Lower leg skin (tissue), 4 donors: ENCODE measurements at regions of chr13 and their contacts with region 1.

Region 1: GRCh38 chr13:29513397-29514322 is 81.8 kb downstream of the SLC7A1 start:
- DNase-seq: no peak
- H3K4me3 ChIP-seq: no peak overlapping the region
- CTCF ChIP-seq: no peak
- POLR2A ChIP-seq: no peak

Region 2: DNA sequence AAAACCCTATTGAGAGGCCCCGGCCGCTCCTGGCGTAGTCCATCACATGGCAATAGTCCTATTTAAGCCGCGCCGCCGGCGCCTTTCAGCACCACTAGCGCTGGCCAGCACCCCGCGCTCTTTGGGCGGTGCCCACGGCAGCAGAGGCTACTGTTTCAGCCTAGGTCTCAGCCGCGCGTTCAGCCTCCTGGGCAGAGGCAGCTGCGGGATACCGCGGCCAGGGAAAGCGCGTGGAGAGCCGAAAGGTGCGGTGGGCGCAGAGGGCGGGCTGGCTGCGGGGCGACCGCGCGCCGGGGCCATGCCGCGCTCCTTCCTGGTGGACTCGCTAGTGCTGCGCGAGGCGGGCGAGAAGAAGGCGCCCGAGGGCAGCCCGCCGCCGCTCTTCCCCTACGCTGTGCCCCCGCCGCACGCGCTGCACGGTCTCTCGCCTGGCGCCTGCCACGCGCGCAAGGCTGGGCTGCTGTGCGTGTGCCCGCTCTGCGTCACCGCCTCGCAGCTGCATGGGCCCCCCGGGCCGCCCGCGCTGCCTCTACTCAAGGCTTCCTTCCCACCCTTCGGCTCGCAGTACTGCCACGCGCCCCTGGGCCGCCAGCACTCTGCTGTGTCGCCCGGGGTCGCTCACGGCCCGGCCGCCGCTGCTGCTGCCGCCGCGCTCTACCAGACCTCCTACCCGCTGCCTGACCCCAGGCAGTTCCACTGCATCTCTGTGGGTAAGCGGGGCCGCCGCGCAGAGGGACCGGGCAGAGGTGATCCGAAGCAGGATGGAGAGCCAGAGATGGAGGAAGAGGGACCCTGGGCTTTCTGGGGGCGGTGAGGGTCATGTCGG is 1721.1 kb before region 1 on chr13 and contains the start of gene GSX1:
- intact Hi-C with region 1: no loop called
- DNase-seq: no peak
- H3K4me3 ChIP-seq: no peak within 1 kb of the TSS
- CTCF ChIP-seq: no peak
- POLR2A ChIP-seq: no peak
- total RNA-seq, gene GSX1: not detected

Region 3: GRCh38 chr13:29484236-29484635 is 29.4 kb before region 1 on chr13:
- intact Hi-C with region 1: no loop called
- DNase-seq: no peak
- H3K4me3 ChIP-seq: no peak overlapping the region
- CTCF ChIP-seq: no peak
- POLR2A ChIP-seq: no peak

Region 4: GRCh38 chr13:29707876-29708543 is 194.3 kb after region 1 on chr13:
- intact Hi-C with region 1: loop called (anchors 10 kb)
- DNase-seq: no peak
- H3K4me3 ChIP-seq: no peak overlapping the region
- CTCF ChIP-seq: no peak
- POLR2A ChIP-seq: no peak